ENCODE measurements at regions of chr4 and their contacts with region 1.

Region 1: DNA sequence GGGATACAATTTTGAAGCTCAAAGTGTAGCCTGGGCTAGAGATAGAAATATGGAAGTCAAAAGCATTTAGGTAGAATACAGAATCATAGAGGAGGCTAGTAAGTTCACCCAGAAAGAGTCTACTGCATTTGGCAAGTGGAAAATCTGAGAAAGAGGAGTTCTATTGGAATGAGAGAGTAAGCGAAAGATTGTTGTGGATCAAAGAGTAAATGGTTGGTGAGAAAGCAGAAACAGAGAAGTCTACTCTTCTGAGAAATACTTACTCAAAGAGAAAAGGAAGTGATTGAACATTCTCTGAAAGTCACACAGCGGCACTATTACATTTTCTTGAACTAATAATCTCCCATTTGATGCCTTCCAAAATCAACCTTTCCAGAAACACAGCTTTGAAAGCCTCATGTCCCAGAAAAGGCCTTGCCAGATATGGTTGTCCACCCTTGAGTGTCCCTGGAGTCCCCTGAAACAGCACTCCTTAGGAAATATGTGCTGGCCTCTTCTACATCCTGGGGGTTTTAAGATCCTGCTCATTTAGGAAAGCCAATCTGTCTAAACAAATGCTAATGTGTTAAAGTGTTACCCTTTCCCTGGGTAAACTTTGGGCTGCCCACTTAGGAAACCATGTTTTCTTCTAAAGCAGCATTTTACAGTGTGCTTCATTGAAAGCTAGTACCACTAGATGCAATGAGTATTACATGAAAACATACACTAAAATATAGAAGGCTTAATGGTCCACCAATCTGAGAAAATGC is 132.6 kb downstream of the INPP4B start:
- DNase-seq: no peak
- H3K4me3 Mint-ChIP-seq: no peak overlapping the region
- H3K27ac Mint-ChIP-seq: peak overlapping the region; percentile 40
- H3K4me1 Mint-ChIP-seq: peaks cover 46% of the 10 kb centered on the region
- H3K27me3 Mint-ChIP-seq: no peaks in the 10 kb centered on the region

Region 2: DNA sequence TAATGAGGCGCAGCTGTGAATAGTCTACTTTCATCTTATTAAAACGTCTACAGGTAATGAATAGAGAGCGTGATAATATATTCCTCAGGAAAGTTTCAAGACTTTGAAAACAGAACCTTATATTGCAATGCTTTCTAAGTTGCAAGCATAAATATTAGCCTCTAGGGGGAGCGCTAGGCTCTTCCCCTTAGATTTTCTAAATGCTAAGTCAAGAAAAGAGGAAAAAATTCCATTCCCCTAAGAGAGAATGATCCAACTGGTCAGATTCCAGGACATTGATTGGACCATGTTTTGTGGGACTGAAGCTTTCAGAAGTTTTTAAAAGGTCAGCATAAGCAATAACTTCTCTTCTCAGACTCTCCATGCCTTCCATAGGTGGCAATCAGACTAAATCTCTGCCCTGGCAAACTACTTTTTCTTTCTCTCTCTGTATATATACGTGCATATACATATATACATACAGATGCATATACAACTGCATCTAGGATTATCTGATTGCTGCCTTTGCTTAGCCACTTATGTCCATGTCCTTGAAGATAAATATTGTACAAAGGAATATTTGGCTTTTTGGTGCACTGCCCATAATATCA is 360.2 kb before region 1 on chr4:
- intact Hi-C with region 1: loop called (anchors 5 kb)
- DNase-seq: no peak
- H3K4me3 Mint-ChIP-seq: peak overlapping the region; percentile 15
- H3K27ac Mint-ChIP-seq: peak overlapping the region; percentile 88
- H3K4me1 Mint-ChIP-seq: peaks cover 89% of the 10 kb centered on the region
- H3K27me3 Mint-ChIP-seq: no peaks in the 10 kb centered on the region

Region 3: DNA sequence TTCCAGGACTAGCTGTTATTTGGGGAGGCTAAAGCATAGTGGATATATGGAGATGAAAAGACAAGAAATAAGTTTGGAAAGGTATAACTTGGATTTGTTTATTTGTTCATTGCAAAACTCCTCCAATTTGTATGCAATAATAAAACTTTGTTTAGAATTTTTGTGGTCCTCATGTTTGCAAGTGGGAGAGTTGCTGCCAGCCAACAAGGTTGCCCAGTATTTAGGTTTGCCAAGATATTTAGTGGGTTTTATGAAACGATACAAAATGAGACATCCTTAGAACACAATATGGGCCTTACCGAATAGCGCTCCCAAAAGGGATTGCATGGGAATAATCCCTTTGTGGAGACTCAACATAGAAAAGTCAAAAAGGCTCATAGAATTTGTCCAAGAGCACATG is 29.5 kb before region 1 on chr4:
- intact Hi-C with region 1: no loop called
- DNase-seq: no peak
- H3K4me3 Mint-ChIP-seq: no peak overlapping the region
- H3K27ac Mint-ChIP-seq: no peak overlapping the region
- H3K4me1 Mint-ChIP-seq: peaks cover 15% of the 10 kb centered on the region
- H3K27me3 Mint-ChIP-seq: no peaks in the 10 kb centered on the region

Region 4: DNA sequence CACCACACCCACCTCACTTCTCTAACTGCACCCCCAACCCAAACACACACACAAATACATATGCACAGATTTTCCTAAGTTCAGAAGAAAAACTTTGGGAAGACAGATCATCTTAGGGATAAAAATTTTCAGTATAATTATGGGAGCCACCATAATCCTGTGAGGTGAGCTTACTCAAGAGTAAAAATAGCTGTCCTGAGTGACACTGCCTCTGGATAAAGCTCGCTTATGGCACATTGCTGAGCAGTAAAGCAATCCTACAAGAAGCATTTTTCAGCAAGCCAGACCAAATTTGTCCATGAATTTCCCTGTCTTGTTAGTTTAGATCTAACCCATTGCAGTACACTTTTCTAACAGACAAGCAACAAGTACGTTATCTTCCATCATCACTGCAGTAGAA is 48.8 kb after region 1 on chr4:
- intact Hi-C with region 1: no loop called
- DNase-seq: no peak
- H3K4me3 Mint-ChIP-seq: no peak overlapping the region
- H3K27ac Mint-ChIP-seq: no peak overlapping the region
- H3K4me1 Mint-ChIP-seq: peaks cover 2% of the 10 kb centered on the region
- H3K27me3 Mint-ChIP-seq: no peaks in the 10 kb centered on the region

Measured in activated T-helper 2 cell treated with anti-CD3 and anti-CD28 coated beads, Interferon-gamma antibody, Interleukin-2, Interleukin-4, amounts not matched to agents 10 μg/mL and 5 μg/mL and 100 μg/mL, durations not matched to agents 14 hours and 24 hours and 36 hours (primary cell).